Pancreas (tissue), 10 donors: ENCODE measurements at regions of chr2 and their contacts with region 1.

Region 1: GRCh38 chr2:17851731-17852585 is 26.5 kb upstream of the KCNS3 start:
- DNase-seq: peak in 5 of 6 donors; percentile 11 to 65 (median 39)
- ATAC-seq: peak; percentile 70 to 95 (median 93)
- H3K4me3 ChIP-seq: no peak overlapping the region
- H3K27ac ChIP-seq: no peak overlapping the region
- H3K4me1 ChIP-seq: no peaks in the 10 kb centered on the region
- H3K27me3 ChIP-seq: no peaks in the 10 kb centered on the region
- CTCF ChIP-seq: peak; percentile 65 to 85 (median 82)

Region 2: GRCh38 chr2:18149645-18150246 is 297.8 kb after region 1 on chr2:
- intact Hi-C with region 1: loop called in 2 of 3 experiments (anchors 5 to 10 kb)
- DNase-seq: no peak
- ATAC-seq: peak in 3 of 4 donors; percentile 55 to 71 (median 69)
- H3K4me3 ChIP-seq: no peak overlapping the region
- H3K27ac ChIP-seq: no peak overlapping the region
- H3K4me1 ChIP-seq: peaks cover 0 to 4% (median 0%) of the 10 kb centered on the region in 3 donors
- H3K27me3 ChIP-seq: no peaks in the 10 kb centered on the region
- CTCF ChIP-seq: peak; percentile 43 to 73 (median 56)

Region 3: DNA sequence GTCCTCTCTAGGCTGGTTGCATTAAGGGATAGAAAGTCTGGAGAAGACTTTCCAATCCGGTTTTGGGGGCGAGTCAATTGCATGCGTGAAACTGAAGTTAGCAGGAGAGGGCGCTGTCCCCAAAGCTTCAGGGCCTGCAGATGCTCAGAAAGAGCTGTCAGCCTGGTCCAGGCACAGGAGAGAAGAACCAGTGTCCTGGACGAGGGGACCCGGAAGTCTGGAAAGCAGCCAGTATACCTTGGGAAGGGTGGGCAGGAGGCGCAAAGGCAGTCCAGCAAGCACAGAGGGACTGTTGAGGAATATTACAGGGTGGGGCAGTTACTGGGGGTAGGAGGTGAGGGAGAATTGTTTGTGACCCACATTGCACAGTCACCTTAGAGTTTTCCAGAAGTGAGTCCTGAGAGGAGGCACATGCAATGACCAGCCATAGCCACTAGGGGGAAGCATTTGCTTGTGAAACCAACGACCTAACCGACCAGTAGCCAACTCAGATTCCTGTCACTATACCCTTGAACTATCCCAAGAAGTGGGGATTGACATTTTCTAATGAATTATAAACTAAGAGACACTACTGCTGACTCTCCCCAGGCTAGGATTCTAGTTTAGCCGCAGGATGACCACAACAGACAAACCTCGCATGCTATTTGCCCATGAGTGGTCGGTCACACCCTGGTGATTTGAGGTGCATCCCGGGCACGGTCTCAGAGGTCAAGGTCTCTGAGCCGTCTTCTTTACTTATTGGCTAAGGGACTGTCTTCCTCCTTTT is 535.7 kb after region 1 on chr2:
- intact Hi-C with region 1: loop called in 1 of 3 experiments (anchors 10 kb)
- DNase-seq: peak; percentile 54 to 83 (median 76)
- ATAC-seq: peak; percentile 66 to 98 (median 94)
- H3K4me3 ChIP-seq: no peak overlapping the region
- H3K27ac ChIP-seq: no peak overlapping the region
- H3K4me1 ChIP-seq: no peaks in the 10 kb centered on the region
- H3K27me3 ChIP-seq: no peaks in the 10 kb centered on the region
- CTCF ChIP-seq: peak; percentile 92 to 98 (median 96)